Caco-2 (cell line): ENCODE measurements at regions of chr6 and their contacts with region 1.

Region 1: GRCh38 chr6:69064226-69064625 is 429.1 kb downstream of the ADGRB3 start:
- DNase-seq: no peak
- H3K4me3 ChIP-seq: no peak overlapping the region
- H3K4me3 Mint-ChIP-seq: no peak overlapping the region
- H3K27ac Mint-ChIP-seq: no peak overlapping the region
- H3K4me1 ChIP-seq: peaks cover 42% of the 10 kb centered on the region
- H3K4me1 Mint-ChIP-seq: peaks cover 12% of the 10 kb centered on the region
- H3K27me3 ChIP-seq: no peaks in the 10 kb centered on the region
- H3K27me3 Mint-ChIP-seq: no peaks in the 10 kb centered on the region
- CTCF ChIP-seq: no peak

Region 2: DNA sequence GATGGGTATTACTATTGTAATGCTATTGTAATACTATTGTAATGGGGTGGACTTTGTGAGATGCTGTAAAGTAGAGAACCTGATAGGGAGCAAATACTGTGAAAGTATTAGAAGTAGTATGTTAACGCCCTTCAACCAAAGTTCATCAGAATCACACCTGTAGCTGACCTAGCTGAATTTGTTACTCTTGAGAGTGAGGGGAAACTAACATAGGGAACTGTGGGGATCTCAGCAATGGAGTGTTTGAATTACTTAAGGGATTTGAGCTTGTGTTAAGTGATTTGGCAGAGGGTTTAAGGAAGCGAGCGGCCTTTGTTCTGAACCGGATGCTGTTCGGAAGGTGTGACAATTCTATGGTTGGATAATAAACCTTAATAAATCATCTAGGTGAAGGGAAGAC is 116.5 kb before region 1 on chr6:
- CTCF ChIA-PET with region 1: no interaction called
- POLR2A ChIA-PET with region 1: no interaction called
- intact Hi-C with region 1: no loop called
- DNase-seq: no peak
- H3K4me3 ChIP-seq: no peak overlapping the region
- H3K4me3 Mint-ChIP-seq: no peak overlapping the region
- H3K27ac Mint-ChIP-seq: no peak overlapping the region
- H3K4me1 ChIP-seq: no peaks in the 10 kb centered on the region
- H3K4me1 Mint-ChIP-seq: no peaks in the 10 kb centered on the region
- H3K27me3 ChIP-seq: no peaks in the 10 kb centered on the region
- H3K27me3 Mint-ChIP-seq: peaks cover 3% of the 10 kb centered on the region
- CTCF ChIP-seq: no peak

Region 3: GRCh38 chr6:68994521-68994920 is 69.7 kb before region 1 on chr6:
- CTCF ChIA-PET with region 1: no interaction called
- POLR2A ChIA-PET with region 1: no interaction called
- intact Hi-C with region 1: loop called (anchors 1 kb)
- DNase-seq: no peak
- H3K4me3 ChIP-seq: no peak overlapping the region
- H3K4me3 Mint-ChIP-seq: no peak overlapping the region
- H3K27ac Mint-ChIP-seq: no peak overlapping the region
- H3K4me1 ChIP-seq: peaks cover 47% of the 10 kb centered on the region
- H3K4me1 Mint-ChIP-seq: peaks cover 29% of the 10 kb centered on the region
- H3K27me3 ChIP-seq: no peaks in the 10 kb centered on the region
- H3K27me3 Mint-ChIP-seq: no peaks in the 10 kb centered on the region
- CTCF ChIP-seq: no peak

Region 4: DNA sequence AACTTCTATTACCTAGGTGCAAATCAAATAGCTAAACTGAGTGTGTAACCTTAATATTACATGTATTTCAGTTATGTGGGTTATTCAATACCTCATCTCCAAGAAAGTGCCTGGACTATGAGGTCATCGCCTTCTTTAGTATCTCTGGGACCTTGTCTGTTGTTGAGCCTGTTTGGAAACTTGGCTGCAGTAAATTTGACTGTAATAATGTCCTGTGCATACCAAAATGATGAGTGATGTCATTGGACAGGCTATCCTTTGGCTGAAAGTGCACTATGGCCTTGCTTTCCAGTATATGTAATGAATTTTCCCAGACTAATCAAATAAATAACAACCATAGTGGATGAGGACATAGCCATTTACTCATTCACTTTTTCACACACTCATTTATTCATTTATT is 25.9 kb after region 1 on chr6:
- CTCF ChIA-PET with region 1: no interaction called
- POLR2A ChIA-PET with region 1: no interaction called
- intact Hi-C with region 1: loop called (anchors 1 kb)
- DNase-seq: peak; percentile 22 to 36
- H3K4me3 ChIP-seq: no peak overlapping the region
- H3K4me3 Mint-ChIP-seq: no peak overlapping the region
- H3K27ac Mint-ChIP-seq: peak overlapping the region; percentile 39
- H3K4me1 ChIP-seq: peaks cover 15% of the 10 kb centered on the region; the same call in 1 of the 2 replicates
- H3K4me1 Mint-ChIP-seq: peaks cover 15% of the 10 kb centered on the region
- H3K27me3 ChIP-seq: no peaks in the 10 kb centered on the region
- H3K27me3 Mint-ChIP-seq: no peaks in the 10 kb centered on the region
- CTCF ChIP-seq: no peak

Region 5: DNA sequence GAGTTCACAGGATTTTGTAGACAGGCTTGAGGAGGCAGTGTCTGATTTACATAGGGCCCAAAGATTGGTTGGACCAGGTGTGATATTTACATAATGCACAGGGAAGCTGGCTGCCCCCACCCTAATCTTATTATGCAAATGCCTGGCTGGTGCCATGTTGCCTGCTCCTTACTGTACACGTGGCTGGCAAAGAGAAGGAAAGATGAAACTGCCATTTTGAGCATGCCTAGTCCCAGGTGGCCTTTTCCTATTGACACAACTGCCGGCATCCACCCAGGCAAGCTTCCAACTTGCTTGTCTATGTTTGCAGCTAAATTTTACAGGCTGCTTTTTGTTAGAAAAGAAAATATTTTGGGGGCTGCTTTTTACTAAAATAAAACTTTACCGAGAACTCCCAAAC is 558.0 kb after region 1 on chr6:
- CTCF ChIA-PET with region 1: no interaction called
- POLR2A ChIA-PET with region 1: no interaction called
- intact Hi-C with region 1: no loop called
- DNase-seq: no peak
- H3K4me3 ChIP-seq: no peak overlapping the region
- H3K4me3 Mint-ChIP-seq: no peak overlapping the region
- H3K27ac Mint-ChIP-seq: no peak overlapping the region
- H3K4me1 ChIP-seq: peaks cover 6% of the 10 kb centered on the region; the same call in 1 of the 2 replicates
- H3K4me1 Mint-ChIP-seq: peaks cover 7% of the 10 kb centered on the region
- H3K27me3 ChIP-seq: no peaks in the 10 kb centered on the region
- H3K27me3 Mint-ChIP-seq: no peaks in the 10 kb centered on the region
- CTCF ChIP-seq: no peak